Activated naive CD4-positive, alpha-beta T cell treated with anti-CD3 and anti-CD28 coated beads, Interleukin-2, amount 10 ng/mL, durations not matched to agents 7 days and 5 days (primary cell): ENCODE measurements at regions of chr5 and their contacts with region 1.

Region 1: DNA sequence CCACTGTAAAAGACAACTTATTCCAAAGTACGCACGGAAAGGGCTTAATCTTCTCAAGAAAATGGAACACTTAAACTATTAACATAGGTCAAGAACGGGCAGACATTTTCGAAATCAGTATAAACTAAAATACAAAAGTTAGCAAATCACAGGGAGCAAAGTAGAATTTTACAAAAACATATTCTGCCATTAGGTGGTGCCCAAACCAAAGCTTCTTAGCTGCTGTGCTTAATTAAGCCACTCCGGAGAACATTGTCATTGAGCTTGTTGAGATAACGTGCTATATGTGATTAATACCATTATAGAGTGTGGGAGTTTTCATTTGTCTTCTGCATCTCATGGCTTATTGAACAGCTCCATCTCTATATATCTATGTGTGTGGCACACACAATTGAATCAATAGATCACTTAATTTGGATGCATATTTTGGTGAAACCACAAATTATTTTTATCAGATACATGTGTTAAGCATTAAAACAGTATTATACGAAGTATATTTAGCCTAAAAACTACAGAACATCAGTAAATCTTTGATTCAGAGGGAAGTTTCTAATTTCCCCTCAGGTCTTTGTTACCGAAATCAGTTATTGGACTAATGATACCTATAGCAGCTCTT is 23.4 kb downstream of the UBLCP1 start:
- DNase-seq: no peak
- H3K4me3 Mint-ChIP-seq: no peak overlapping the region
- H3K27ac Mint-ChIP-seq: no peak overlapping the region
- H3K4me1 Mint-ChIP-seq: no peaks in the 10 kb centered on the region
- H3K27me3 Mint-ChIP-seq: no peaks in the 10 kb centered on the region

Region 2: GRCh38 chr5:159156426-159157238 is 129.9 kb before region 1 on chr5:
- CTCF ChIA-PET with region 1: interaction called, 15 read pairs
- DNase-seq: peak; percentile 39
- H3K4me3 Mint-ChIP-seq: no peak overlapping the region
- H3K27ac Mint-ChIP-seq: peak overlapping the region; percentile 73
- H3K4me1 Mint-ChIP-seq: peaks cover 25% of the 10 kb centered on the region
- H3K27me3 Mint-ChIP-seq: no peaks in the 10 kb centered on the region

Region 3: GRCh38 chr5:159316519-159317383 is 30.2 kb after region 1 on chr5:
- CTCF ChIA-PET with region 1: interaction called, 16 read pairs
- DNase-seq: peak; percentile 69
- H3K4me3 Mint-ChIP-seq: no peak overlapping the region
- H3K27ac Mint-ChIP-seq: no peak overlapping the region
- H3K4me1 Mint-ChIP-seq: no peaks in the 10 kb centered on the region
- H3K27me3 Mint-ChIP-seq: peaks cover 37% of the 10 kb centered on the region

Region 4: GRCh38 chr5:159444441-159445082 is 158.0 kb after region 1 on chr5:
- CTCF ChIA-PET with region 1: interaction called, 15 read pairs
- DNase-seq: no peak
- H3K4me3 Mint-ChIP-seq: no peak overlapping the region
- H3K27ac Mint-ChIP-seq: no peak overlapping the region
- H3K4me1 Mint-ChIP-seq: peaks cover 7% of the 10 kb centered on the region
- H3K27me3 Mint-ChIP-seq: peaks cover 60% of the 10 kb centered on the region

Region 5: DNA sequence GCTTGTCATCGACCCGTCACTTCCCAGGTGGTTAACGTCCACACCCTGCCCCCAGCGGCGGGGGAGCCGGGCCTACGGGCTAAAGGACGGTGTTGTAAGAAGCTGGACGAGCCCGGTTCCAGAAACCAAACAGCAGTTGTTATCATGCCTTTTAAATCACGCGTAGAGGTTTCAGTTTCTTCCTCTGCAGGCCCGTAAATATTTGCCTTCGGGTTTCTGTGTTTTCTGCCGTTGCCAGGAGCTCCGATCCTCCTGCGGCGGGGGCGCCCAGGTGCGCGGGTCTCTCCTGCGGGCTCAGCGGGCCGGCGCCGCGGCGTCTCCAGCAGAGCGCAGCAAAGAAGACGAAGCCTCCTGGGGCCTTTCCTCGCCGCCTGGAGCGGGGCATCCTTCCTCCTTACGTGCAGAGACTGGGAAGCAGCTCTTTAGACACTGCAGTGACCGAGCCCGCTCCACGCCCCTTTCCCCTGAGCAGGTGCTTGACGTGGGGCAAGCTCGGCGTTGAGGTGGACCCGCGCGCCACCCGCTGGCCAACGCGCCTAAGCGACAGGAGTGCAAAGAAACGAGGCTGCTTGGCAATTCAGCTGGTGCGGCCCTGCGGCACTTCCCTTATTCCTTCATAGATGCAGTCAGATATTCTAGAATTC is 700.6 kb after region 1 on chr5:
- CTCF ChIA-PET with region 1: interaction called, 16 read pairs
- DNase-seq: peak; percentile 84
- H3K4me3 Mint-ChIP-seq: peak overlapping the region; percentile 53
- H3K27ac Mint-ChIP-seq: no peak overlapping the region
- H3K4me1 Mint-ChIP-seq: peaks cover 6% of the 10 kb centered on the region
- H3K27me3 Mint-ChIP-seq: peaks cover 74% of the 10 kb centered on the region